ENCODE measurements at regions of chr1 and their contacts with region 1.

Region 1: GRCh38 chr1:224434691-224435317 is at the start of gene WDR26:
- DNase-seq: peak; percentile 83
- H3K4me3 Mint-ChIP-seq: peak within 1 kb of the TSS; percentile 90
- H3K27ac Mint-ChIP-seq: peak within 1 kb of the TSS; percentile 92
- H3K4me1 Mint-ChIP-seq: peaks cover 44% of the 10 kb centered on the region
- H3K27me3 Mint-ChIP-seq: no peaks in the 10 kb centered on the region
- total RNA-seq, gene WDR26: 80.5 and 82.0 TPM in 2 replicates

Region 2: GRCh38 chr1:223831755-223832636 is 602.8 kb before region 1 on chr1:
- intact Hi-C with region 1: loop called (anchors 5 kb)
- DNase-seq: no peak
- H3K4me3 Mint-ChIP-seq: peak overlapping the region; percentile 54
- H3K27ac Mint-ChIP-seq: peak overlapping the region; percentile 92
- H3K4me1 Mint-ChIP-seq: peaks cover 24% of the 10 kb centered on the region
- H3K27me3 Mint-ChIP-seq: no peaks in the 10 kb centered on the region

Region 3: GRCh38 chr1:224113918-224114786 is 320.7 kb before region 1 on chr1 and contains the start of gene FBXO28:
- intact Hi-C with region 1: loop called (anchors 1 kb)
- DNase-seq: peak; percentile 90
- H3K4me3 Mint-ChIP-seq: peak within 1 kb of the TSS; percentile 80
- H3K27ac Mint-ChIP-seq: peak within 1 kb of the TSS; percentile 79
- H3K4me1 Mint-ChIP-seq: peaks cover 25% of the 10 kb centered on the region
- H3K27me3 Mint-ChIP-seq: peaks cover 17% of the 10 kb centered on the region
- total RNA-seq, gene FBXO28: 22.9 and 24.3 TPM in 2 replicates

Region 4: GRCh38 chr1:224356685-224357625 is 77.8 kb before region 1 on chr1 and contains the start of gene CNIH4:
- intact Hi-C with region 1: loop called (anchors 1 kb)
- DNase-seq: peak; percentile 88
- H3K4me3 Mint-ChIP-seq: peak within 1 kb of the TSS; percentile 94
- H3K27ac Mint-ChIP-seq: peak within 1 kb of the TSS; percentile 89
- H3K4me1 Mint-ChIP-seq: peaks cover 32% of the 10 kb centered on the region
- H3K27me3 Mint-ChIP-seq: no peaks in the 10 kb centered on the region
- total RNA-seq, gene CNIH4: 60.2 and 60.7 TPM in 2 replicates

Region 5: DNA sequence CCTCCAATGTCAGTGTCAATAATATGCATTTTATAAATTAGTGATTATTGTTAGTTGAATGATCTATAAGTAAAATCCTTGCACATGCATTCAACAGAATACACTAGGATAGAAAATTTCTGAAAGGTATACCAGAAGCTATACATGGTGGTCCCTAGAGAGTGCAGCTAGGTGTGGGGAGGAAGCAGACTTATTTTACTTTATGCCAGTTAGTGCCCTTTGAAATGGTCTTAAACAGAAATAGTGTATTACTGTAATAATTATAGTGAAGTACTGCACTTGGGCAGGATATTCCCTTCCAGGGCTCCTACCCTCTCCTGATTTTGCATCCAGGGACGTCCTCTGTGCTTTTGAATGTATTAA is 23.0 kb after region 1 on chr1:
- intact Hi-C with region 1: loop called (anchors 2 kb)
- DNase-seq: no peak
- H3K4me3 Mint-ChIP-seq: no peak overlapping the region
- H3K27ac Mint-ChIP-seq: no peak overlapping the region
- H3K4me1 Mint-ChIP-seq: peaks cover 23% of the 10 kb centered on the region
- H3K27me3 Mint-ChIP-seq: no peaks in the 10 kb centered on the region

Region 6: DNA sequence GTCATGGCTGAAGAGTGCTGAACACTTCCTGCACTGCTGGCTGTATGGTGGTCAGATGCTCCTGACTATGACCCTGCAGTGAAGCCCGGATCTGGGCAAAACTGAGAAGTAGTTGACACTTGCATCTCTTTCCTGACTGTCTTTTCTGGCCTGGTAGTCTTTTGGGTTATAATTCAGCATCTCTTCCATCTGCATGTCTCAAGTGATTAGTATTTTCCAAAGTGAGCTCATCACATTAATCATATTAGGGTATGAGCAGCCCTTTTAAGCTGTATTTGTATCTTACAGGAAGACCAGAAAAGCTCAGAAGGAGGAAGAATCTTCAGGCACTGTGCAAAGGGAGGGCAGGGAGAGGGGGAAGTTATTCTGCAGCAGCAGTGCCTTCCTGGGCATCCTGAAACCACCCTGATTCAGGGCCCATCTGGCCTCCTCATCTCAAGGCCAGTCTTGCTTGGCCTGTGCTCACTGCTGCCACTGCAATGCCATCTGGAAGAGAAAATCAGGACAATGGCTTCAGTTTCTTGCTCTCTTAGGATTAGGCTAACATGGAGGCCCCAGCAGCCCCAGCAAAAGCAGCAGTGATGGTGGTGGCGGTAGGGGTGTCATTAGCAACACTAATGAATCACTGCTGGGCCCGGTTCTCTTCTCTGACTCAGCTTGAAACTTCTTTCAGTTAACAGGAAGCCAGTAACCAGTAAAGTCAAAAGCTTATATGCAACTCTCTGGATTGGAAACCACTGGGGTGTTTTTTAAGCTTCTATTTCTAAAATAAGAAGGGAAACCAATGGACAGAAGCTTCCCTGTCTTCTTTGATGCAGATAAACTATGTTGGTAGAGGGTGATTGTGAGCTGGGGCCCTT is 63.1 kb after region 1 on chr1:
- intact Hi-C with region 1: loop called (anchors 2 kb)
- DNase-seq: peak; percentile 68
- H3K4me3 Mint-ChIP-seq: peak overlapping the region; percentile 60
- H3K27ac Mint-ChIP-seq: peak overlapping the region; percentile 96
- H3K4me1 Mint-ChIP-seq: peaks cover 52% of the 10 kb centered on the region
- H3K27me3 Mint-ChIP-seq: no peaks in the 10 kb centered on the region

Region 7: GRCh38 chr1:225685476-225686176 is 1250.8 kb after region 1 on chr1:
- intact Hi-C with region 1: no loop called
- DNase-seq: no peak
- H3K4me3 Mint-ChIP-seq: no peak overlapping the region
- H3K27ac Mint-ChIP-seq: no peak overlapping the region
- H3K4me1 Mint-ChIP-seq: no peaks in the 10 kb centered on the region
- H3K27me3 Mint-ChIP-seq: peaks cover 6% of the 10 kb centered on the region